ENCODE measurements at regions of chr1 and their contacts with region 1.

Region 1: GRCh38 chr1:26787706-26788514 is at the start of gene PIGV:
- DNase-seq: no peak
- ATAC-seq: peak; percentile 88
- H3K4me3 ChIP-seq: peak within 1 kb of the TSS; percentile 63 to 71
- H3K27ac ChIP-seq: peak within 1 kb of the TSS; percentile 100
- H3K4me1 ChIP-seq: peaks cover 64% of the 10 kb centered on the region
- H3K27me3 ChIP-seq: no peaks in the 10 kb centered on the region
- CTCF ChIP-seq: no peak
- total RNA-seq, gene PIGV: 20.1 TPM

Region 2: DNA sequence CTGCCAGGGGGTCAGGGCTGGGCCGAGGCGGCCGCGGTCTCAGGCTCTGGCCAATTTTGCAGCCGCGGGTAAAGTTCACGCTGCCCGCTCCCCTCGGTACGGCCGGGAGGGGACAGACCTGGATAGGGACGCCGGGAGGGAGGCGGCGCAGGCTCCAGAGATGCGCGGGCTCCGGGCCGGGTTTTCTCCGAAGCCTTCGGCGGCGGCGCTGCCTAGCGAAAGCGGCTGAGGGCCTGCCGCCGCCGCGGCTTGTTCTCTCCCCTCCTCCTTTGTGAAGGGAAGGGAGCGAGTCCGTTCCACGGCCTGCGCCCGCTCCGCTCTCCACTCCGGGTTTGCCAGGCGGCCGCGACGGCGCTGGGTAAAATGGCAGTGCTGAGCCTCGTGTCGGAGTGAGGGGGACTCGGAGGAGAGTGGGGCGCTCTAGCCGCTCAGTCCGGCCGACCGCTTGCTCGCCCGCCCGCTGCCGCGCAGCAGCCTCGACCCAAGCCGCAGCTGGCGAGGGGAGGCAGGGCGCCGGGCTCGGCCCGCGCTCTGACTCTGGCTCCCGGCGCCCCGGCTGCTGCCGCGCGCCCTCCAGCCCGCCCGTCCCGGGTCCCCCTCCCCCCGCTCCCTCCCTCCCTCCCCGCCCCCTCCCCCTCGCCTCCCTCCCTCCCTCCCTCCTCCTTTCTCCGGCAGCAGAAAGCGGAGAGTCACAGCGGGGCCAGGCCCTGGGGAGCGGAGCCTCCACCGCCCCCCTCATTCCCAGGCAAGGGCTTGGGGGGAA is 92.4 kb before region 1 on chr1 and contains the start of gene ARID1A:
- CTCF ChIA-PET with region 1: no interaction called
- POLR2A ChIA-PET with region 1: interaction called, 8 read pairs
- in situ Hi-C with region 1: no loop called
- intact Hi-C with region 1: loop called (anchors 5 kb)
- DNase-seq: peak; percentile 71
- ATAC-seq: peak; percentile 63
- H3K4me3 ChIP-seq: peak within 1 kb of the TSS; percentile 71 to 80
- H3K27ac ChIP-seq: peak within 1 kb of the TSS; percentile 100
- H3K4me1 ChIP-seq: peaks cover 46% of the 10 kb centered on the region
- H3K27me3 ChIP-seq: no peaks in the 10 kb centered on the region
- CTCF ChIP-seq: 0 out of 2 replicates have a peak, but pooled peaks have one; percentile 8
- total RNA-seq, gene ARID1A: 110 TPM

Region 3: GRCh38 chr1:26705788-26706311 is 82.1 kb before region 1 on chr1:
- CTCF ChIA-PET with region 1: interaction called, 11 read pairs
- POLR2A ChIA-PET with region 1: no interaction called
- in situ Hi-C with region 1: no loop called
- intact Hi-C with region 1: no loop called
- DNase-seq: peak; percentile 98
- ATAC-seq: peak; percentile 82
- H3K4me3 ChIP-seq: peak overlapping the region in 1 of 2 experiments; percentile 31; a peak in 2 of 4 replicates
- H3K27ac ChIP-seq: peak overlapping the region; percentile 81
- H3K4me1 ChIP-seq: peaks cover 72% of the 10 kb centered on the region
- H3K27me3 ChIP-seq: no peaks in the 10 kb centered on the region
- CTCF ChIP-seq: no peak

Region 4: DNA sequence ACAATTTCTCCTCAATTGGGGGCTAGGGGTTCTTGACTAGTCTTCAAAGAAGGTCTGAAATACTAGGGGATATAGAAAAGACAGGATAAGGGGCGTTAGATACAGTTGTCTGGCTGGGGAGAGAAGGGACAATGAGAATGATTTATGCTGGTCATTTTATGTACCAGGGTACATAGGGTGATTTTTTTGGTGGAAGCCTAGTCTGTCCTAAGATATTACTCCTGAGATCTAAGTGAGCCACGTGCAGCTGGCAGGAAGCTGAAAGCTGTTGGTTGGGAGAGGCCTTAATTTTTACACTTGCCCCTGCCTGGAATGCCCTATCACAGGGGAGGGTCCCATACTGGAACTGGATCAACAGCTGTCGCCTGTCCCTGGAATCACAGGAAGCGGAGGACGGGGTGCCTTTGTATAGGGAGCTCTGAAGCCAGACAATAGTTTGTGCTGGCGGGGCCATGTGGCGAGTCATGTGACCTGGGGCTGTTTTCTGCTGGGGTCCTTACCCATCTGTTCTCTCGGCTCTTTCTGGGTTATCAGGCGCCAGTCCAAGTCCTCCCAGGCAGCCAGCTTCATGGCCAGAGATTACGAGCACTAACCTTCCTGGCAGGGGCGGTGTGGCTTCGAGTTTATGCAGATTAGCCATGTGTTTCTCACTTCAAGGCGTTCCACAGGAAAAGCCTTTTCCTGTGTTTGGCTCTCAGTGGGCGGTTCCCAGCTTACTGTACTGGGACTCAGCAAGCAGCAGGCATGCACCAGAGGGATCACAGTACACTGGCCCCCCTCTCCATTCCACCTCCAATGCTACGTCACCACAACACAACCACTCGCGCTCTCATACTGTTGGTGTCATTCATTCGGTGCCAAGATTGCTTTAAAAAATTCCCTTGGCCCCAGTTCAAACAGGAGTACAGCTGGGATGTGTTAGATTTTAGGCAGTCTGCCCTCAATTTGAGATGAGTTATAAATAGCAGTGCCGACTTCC is 64.6 kb before region 1 on chr1:
- CTCF ChIA-PET with region 1: no interaction called
- POLR2A ChIA-PET with region 1: interaction called, 15 read pairs
- in situ Hi-C with region 1: no loop called
- intact Hi-C with region 1: no loop called
- DNase-seq: no peak
- ATAC-seq: peak; percentile 83
- H3K4me3 ChIP-seq: peak overlapping the region in 1 of 2 experiments; percentile 6; a peak in 2 of 4 replicates
- H3K27ac ChIP-seq: peak overlapping the region; percentile 5
- H3K4me1 ChIP-seq: peaks cover 69% of the 10 kb centered on the region
- H3K27me3 ChIP-seq: no peaks in the 10 kb centered on the region
- CTCF ChIP-seq: no peak

Measured in Panc1 (cell line).